Activated CD4-positive, alpha-beta T cell treated with anti-CD3 and anti-CD28 coated beads for 36 hours (primary cell): ENCODE measurements at regions of chr13 and their contacts with region 1.

Region 1: DNA sequence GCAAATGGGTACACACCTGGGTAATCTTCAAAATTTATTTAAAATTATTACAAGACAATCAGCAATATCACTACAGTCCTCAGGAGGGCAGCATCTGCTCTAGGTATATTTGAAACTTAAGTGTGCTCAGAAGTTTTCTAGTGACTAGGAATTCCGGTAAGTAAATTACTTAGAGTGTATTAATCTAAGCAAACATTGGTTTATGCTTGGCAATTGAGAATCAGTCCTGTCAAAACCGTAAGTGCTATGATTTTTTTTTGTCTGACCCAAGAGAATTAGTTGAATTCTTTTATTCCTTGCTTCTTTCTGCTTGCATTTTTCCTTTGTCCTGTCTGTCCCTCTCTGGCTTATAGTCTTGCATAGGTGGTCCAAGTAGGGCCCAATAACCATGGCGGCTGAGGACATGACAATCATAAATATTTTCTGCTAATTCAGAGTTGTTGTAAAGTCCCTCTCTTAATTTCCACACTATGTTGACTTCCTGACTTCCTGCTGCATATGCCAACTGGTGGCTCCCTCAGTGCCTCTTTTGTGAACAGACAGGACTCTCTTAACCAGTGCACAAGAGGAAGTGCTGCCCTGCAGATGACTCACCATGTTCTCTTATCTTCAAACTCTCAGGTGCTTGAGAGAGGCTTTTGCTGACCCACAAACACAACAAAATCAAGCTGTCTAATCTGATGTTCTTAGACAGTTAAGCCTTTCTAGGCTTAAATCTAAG is 82.2 kb downstream of the SLAIN1 start:
- DNase-seq: peak; percentile 46
- ATAC-seq: peak; percentile 85
- H3K4me3 Mint-ChIP-seq: no peak overlapping the region
- H3K27ac Mint-ChIP-seq: peak overlapping the region; percentile 52
- H3K4me1 Mint-ChIP-seq: peaks cover 14% of the 10 kb centered on the region
- H3K27me3 Mint-ChIP-seq: no peaks in the 10 kb centered on the region

Region 2: GRCh38 chr13:77810430-77810829 is 30.7 kb after region 1 on chr13:
- CTCF ChIA-PET with region 1: interaction called, 9 read pairs
- POLR2A ChIA-PET with region 1: no interaction called
- intact Hi-C with region 1: loop called in 1 of 2 experiments (anchors 1 kb)
- DNase-seq: peak; percentile 6
- ATAC-seq: peak; percentile 86
- H3K4me3 Mint-ChIP-seq: no peak overlapping the region
- H3K27ac Mint-ChIP-seq: no peak overlapping the region
- H3K4me1 Mint-ChIP-seq: peaks cover 3% of the 10 kb centered on the region
- H3K27me3 Mint-ChIP-seq: peaks cover 4% of the 10 kb centered on the region

Region 3: DNA sequence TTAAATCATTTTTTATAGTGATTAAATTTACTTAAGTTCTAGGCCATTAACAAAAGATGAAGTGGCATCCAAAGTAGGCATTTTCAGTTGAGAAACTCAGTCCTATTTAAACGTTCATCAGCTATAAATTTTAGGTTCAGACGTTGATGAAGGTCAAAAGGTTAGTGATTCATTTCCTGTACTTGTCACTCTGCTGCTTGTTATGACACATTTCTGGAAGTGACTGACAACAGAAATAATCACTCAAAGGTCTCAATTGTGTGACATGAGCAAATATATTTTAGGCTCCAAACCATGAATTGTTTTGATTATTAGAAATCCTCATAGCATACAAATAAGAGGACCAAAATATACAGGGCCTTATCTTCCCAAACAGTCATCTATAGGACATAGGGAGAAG is 149.2 kb after region 1 on chr13:
- CTCF ChIA-PET with region 1: no interaction called
- POLR2A ChIA-PET with region 1: no interaction called
- intact Hi-C with region 1: loop called in 1 of 2 experiments (anchors 5 kb)
- DNase-seq: no peak
- ATAC-seq: peak; percentile 69
- H3K4me3 Mint-ChIP-seq: no peak overlapping the region
- H3K27ac Mint-ChIP-seq: no peak overlapping the region
- H3K4me1 Mint-ChIP-seq: peaks cover 10% of the 10 kb centered on the region
- H3K27me3 Mint-ChIP-seq: peaks cover 16% of the 10 kb centered on the region

Region 4: DNA sequence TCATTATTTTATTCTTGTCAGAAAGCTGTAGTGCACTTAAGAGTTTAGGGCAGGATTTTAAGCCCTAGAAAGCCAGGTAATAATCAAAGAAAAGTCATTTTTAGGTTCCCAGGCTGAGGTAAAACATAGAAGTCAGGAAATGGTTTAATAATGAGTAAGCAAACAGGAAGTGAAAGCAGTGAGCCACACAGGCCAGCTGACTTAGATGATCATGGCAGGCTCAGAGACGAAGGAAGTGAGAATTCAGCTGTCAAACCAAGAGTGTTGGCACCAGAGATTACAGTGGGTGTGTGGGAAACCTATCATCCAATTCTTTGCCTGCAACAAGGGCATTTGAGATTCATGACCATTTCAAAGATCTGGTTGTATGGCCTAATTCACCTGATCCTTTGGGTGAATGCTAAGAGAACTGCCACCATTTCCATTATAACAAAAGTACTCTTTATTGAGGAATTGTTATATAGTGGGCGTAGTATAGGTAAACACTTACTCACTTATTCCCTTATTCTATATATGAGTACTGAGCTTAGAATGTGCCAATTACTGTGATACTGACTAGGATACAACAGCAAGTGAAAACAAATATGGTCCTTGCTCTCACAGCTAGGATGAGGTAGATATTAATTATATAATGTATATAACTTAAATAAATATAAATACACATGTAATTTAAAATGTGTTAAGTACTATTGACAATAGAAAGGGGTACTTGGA is 242.6 kb after region 1 on chr13:
- CTCF ChIA-PET with region 1: no interaction called
- POLR2A ChIA-PET with region 1: no interaction called
- intact Hi-C with region 1: loop called in 1 of 2 experiments (anchors 5 kb)
- DNase-seq: peak; percentile 69
- ATAC-seq: peak; percentile 99
- H3K4me3 Mint-ChIP-seq: no peak overlapping the region
- H3K27ac Mint-ChIP-seq: no peak overlapping the region
- H3K4me1 Mint-ChIP-seq: peaks cover 6% of the 10 kb centered on the region
- H3K27me3 Mint-ChIP-seq: peaks cover 3% of the 10 kb centered on the region

Region 5: DNA sequence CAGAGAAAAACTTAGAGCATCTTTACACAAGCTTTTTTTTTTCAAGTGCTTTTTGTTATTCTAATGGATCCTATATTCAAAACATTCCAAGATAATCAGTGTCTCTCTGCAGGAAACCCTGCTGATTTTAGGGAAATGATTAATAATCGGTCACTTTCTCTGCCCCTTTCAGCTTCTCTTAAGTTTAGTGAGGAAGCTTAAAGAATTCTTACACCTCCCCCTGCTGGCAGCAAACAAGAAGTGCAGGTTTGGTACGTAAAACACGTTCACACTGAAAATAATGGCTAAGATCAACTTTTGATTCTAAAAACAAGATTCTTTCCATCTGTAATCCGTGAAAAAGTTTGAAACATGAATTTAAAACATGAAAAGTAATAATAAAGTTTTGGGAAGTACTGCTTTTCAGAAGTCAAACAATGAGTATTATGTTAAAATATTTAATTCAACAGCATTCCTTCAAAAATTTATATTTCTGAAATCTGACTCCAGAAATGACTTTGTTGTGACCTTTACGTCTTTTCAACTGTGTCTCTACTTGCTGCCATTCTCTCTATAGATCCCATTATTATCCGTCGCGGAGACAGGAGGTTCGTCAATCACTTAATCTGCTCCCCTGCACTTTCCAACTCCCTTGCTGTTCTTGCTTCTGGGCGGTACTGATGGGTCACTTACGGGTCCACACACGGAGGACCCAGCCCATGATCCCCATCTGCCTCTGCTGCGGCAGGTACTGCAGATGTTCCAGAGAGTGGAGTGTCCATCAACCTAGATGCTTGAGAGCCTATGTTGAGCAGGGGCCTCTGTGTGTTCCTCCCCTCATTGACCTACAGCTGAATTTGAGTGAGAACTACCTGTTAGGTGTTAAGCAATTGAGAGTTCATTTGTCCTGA is 342.0 kb after region 1 on chr13:
- CTCF ChIA-PET with region 1: interaction called, 28 read pairs
- POLR2A ChIA-PET with region 1: no interaction called
- intact Hi-C with region 1: loop called (anchors 1 kb)
- DNase-seq: peak; percentile 46
- ATAC-seq: no peak
- H3K4me3 Mint-ChIP-seq: no peak overlapping the region
- H3K27ac Mint-ChIP-seq: no peak overlapping the region
- H3K4me1 Mint-ChIP-seq: no peaks in the 10 kb centered on the region
- H3K27me3 Mint-ChIP-seq: peaks cover 12% of the 10 kb centered on the region